Activated CD4-positive, alpha-beta T cell treated with anti-CD3 and anti-CD28 coated beads for 36 hours (primary cell): ENCODE measurements at regions of chr12 and their contacts with region 1.

Region 1: DNA sequence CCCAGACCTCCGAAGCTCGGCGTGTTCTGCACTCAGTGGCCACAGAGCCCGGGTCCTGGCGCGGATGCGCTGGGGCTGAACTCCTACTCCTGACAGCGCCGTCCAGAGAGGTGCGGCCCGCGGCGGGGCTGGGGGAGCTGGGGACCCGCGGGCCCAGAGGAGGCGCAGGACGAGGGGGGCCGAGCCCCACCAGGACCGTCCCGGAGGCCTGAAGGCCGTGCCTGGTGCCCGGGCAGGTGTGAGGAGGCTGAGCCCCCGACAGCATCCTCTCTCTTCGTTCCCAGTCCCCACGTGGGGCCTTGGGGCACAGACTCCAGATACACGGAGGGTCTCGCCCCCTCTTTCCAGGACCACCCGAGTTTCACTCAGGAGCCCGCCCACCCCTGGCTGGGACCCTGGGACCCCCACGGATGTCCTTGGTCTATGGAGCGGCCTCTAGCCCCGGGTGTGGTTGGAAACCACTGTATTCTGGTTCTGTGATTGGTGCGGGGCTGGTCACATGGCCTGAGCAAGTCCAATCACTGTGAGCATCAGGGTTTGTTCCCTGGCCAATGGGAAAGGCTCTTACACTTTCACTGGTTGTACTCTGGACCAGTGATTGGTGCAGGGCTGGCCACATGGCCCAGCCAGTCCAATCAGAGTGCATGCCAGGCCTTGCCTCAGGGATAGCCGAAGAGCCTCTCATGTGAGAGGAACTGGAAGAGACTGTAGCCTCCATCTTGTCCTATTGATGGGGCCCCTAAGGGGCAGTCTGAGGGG is 217.6 kb upstream of the SFSWAP start:
- DNase-seq: no peak
- ATAC-seq: peak; percentile 30
- H3K4me3 Mint-ChIP-seq: no peak overlapping the region
- H3K27ac Mint-ChIP-seq: no peak overlapping the region
- H3K4me1 Mint-ChIP-seq: no peaks in the 10 kb centered on the region
- H3K27me3 Mint-ChIP-seq: no peaks in the 10 kb centered on the region

Region 2: GRCh38 chr12:131167334-131167733 is 325.9 kb before region 1 on chr12:
- CTCF ChIA-PET with region 1: no interaction called
- POLR2A ChIA-PET with region 1: interaction called, 3 read pairs
- intact Hi-C with region 1: loop called (anchors 5 kb)
- DNase-seq: no peak
- ATAC-seq: no peak
- H3K4me3 Mint-ChIP-seq: no peak overlapping the region
- H3K27ac Mint-ChIP-seq: no peak overlapping the region
- H3K4me1 Mint-ChIP-seq: no peaks in the 10 kb centered on the region
- H3K27me3 Mint-ChIP-seq: peaks cover 4% of the 10 kb centered on the region

Region 3: GRCh38 chr12:131209082-131210070 is 283.9 kb before region 1 on chr12:
- CTCF ChIA-PET with region 1: no interaction called
- POLR2A ChIA-PET with region 1: no interaction called
- intact Hi-C with region 1: no loop called
- DNase-seq: peak; percentile 60
- ATAC-seq: peak; percentile 69
- H3K4me3 Mint-ChIP-seq: no peak overlapping the region
- H3K27ac Mint-ChIP-seq: peak overlapping the region; percentile 24
- H3K4me1 Mint-ChIP-seq: peaks cover 35% of the 10 kb centered on the region
- H3K27me3 Mint-ChIP-seq: peaks cover 2% of the 10 kb centered on the region

Region 4: GRCh38 chr12:131511391-131511802 is 18.1 kb after region 1 on chr12:
- CTCF ChIA-PET with region 1: no interaction called
- POLR2A ChIA-PET with region 1: no interaction called
- intact Hi-C with region 1: no loop called
- DNase-seq: peak; percentile 78
- ATAC-seq: peak; percentile 100
- H3K4me3 Mint-ChIP-seq: no peak overlapping the region
- H3K27ac Mint-ChIP-seq: peak overlapping the region; percentile 37
- H3K4me1 Mint-ChIP-seq: peaks cover 15% of the 10 kb centered on the region
- H3K27me3 Mint-ChIP-seq: peaks cover 3% of the 10 kb centered on the region